ENCODE measurements at regions of chr14 and their contacts with region 1.

Region 1: DNA sequence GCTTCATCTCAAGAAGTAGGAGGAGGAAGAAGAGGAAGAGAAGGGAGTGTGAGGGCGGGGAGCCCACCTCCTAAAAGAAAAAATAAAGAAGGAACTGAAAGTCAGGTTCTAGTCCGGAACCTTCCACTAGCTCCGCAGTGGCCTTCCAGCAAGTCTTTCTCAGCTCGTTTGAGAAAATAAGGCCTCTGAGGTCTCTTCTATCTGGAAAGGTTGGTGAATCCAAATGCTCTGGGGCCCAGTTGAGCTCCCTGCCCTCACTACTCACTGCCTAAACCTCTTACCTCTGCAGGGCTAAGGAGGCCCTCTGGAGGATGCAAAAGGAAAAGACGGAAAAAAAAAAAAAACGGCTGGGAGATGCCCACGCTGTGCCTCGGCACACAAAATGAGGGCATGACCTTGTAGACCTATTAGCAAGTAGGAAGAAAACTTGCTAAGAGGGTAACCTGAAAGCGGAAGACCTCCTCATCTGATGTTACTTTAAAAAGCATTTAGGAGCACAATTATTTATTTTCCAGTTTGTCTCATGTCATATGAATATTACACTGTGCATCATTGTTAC is 35.9 kb downstream of the FBLN5 start:
- DNase-seq: peak; percentile 68 to 83 (median 82)
- H3K4me3 ChIP-seq: peak overlapping the region in 3 of 7 experiments; percentile 4 to 50 (median 7)
- H3K27ac ChIP-seq: peak overlapping the region in 1 of 2 experiments; percentile 25
- H3K4me1 ChIP-seq: peaks cover 0 to 8% (median 6%) of the 10 kb centered on the region in 4 experiments
- H3K27me3 ChIP-seq: no peaks in the 10 kb centered on the region

Region 2: DNA sequence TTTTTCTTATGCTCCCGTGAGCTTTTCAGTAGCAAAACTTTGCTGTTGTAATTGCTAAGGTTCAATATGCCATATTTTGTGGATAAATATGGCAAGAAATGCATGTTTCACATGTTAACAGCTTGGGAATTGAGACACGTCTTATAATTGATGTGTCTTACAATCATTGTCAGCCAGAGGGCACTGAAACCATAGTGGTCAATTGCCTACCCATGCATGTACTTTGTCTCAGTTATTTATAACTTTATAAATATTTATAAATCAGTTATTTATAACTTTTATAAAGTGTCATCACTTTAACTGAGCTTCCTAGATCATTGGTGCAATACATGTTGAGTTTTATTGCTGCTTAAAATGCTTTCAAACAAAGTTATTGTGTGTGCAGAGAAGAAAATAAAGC is 261.6 kb before region 1 on chr14:
- CTCF ChIA-PET with region 1: interaction called, 33 read pairs
- POLR2A ChIA-PET with region 1: interaction called, 6 read pairs
- DNase-seq: peak; percentile 57 to 79 (median 73)
- H3K4me3 ChIP-seq: no peak overlapping the region
- H3K27ac ChIP-seq: no peak overlapping the region
- H3K4me1 ChIP-seq: no peaks in the 10 kb centered on the region
- H3K27me3 ChIP-seq: no peaks in the 10 kb centered on the region

Region 3: DNA sequence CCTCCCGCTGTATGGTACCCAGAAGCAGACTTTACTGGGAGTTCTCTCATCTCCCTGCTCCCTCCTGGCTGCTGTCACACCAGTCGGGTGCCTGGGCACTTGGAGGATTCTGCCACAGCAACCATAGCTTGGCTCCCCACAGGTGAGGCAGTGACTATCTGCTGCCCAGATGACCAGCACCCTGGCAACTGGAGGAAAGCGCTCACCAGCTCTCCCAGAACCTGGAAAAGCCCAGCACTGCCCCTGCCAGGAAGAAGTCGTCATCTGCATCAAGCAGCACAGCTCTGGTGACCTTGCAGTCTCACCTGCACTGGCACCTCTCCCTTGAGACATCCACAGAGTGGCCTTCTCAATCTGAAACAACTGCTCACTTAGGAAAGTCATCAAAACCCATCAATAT is 12.3 kb before region 1 on chr14:
- CTCF ChIA-PET with region 1: interaction called, 15 read pairs
- POLR2A ChIA-PET with region 1: interaction called, 3 read pairs
- DNase-seq: no peak
- H3K4me3 ChIP-seq: no peak overlapping the region
- H3K27ac ChIP-seq: no peak overlapping the region
- H3K4me1 ChIP-seq: no peaks in the 10 kb centered on the region
- H3K27me3 ChIP-seq: no peaks in the 10 kb centered on the region

Region 4: DNA sequence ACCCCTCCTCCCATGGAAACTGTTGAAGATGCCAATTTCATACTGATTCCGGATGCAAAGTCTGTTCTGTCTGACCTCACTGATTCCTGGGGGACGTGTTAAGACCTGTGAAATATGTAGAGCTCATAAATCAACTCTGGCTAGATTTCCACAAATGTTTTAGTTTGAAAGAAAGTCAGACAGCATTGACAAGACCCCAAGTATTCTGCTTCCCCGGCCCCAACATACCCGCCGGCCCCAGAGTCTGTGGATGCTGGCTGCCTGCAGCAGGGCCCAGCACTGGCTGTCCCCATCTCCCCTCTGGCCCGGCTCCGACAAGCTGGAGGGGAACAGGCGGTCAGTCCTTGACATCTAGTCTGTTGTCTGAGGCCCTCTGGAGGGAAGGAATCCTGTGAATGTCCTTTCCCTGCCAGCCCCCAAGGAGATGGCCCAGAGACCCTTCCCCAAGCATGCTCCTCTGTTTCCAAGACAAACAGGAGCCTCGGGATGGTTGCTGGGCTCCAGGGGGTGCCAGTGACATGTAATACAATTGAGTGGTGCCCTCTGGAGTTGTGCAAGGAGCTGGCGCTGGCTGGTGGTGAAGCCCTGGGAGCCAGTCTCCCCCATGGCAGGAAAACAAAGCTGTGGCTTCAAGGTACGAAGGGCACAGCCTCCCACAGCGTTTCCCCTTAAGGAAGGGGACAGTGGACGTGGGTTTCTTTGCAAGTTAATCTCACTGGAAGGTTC is 13.6 kb after region 1 on chr14:
- CTCF ChIA-PET with region 1: interaction called, 18 read pairs
- POLR2A ChIA-PET with region 1: no interaction called
- DNase-seq: no peak
- H3K4me3 ChIP-seq: no peak overlapping the region
- H3K27ac ChIP-seq: no peak overlapping the region
- H3K4me1 ChIP-seq: peaks cover 0 to 3% (median 0%) of the 10 kb centered on the region in 4 experiments
- H3K27me3 ChIP-seq: no peaks in the 10 kb centered on the region